WTC11 (cell line): ENCODE measurements at regions of chrX and their contacts with region 1.

Region 1: GRCh38 chrX:94361250-94361649 is 687.2 kb downstream of the FAM133A start:
- DNase-seq: no peak
- ATAC-seq: no peak
- H3K4me3 Mint-ChIP-seq: no peak overlapping the region
- H3K27ac Mint-ChIP-seq: no peak overlapping the region
- H3K4me1 Mint-ChIP-seq: peaks cover 30% of the 10 kb centered on the region
- H3K27me3 Mint-ChIP-seq: no peaks in the 10 kb centered on the region
- CTCF ChIP-seq: no peak

Region 2: DNA sequence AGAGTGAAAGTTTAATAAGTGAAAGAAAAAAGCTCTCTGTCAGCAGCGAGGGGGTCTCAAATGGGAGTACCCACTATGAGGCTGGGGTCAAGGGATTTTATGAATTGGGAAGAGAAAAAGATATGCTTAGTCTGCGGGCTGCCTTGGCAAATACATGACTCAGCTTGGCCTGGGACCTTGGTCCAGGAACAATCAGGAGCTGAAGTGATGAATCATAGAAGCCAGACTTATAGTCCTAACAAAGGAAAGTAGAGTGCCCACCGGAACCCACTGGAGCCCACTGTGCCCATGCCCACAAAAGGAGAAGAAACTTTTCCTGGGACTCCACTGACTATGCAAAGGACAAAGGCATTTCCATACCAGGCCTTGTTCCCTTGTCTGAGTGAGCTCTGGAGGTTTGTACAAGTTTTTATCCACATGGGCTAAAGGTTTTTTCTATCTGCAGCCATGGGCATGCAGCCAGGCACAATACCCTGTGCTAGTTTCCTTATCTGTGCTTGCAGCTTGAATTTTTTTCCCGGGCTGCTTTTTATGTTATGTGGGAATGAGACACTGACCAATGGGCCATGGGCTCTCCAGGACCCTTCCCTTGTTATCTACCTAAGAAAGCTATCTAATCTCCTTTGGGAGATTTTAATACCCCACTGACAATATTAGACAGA is 485.5 kb before region 1 on chrX:
- CTCF ChIA-PET with region 1: no interaction called
- POLR2A ChIA-PET with region 1: interaction called, 10 read pairs
- DNase-seq: no peak
- ATAC-seq: no peak
- H3K4me3 Mint-ChIP-seq: no peak overlapping the region
- H3K27ac Mint-ChIP-seq: no peak overlapping the region
- H3K4me1 Mint-ChIP-seq: peaks cover 23% of the 10 kb centered on the region
- H3K27me3 Mint-ChIP-seq: no peaks in the 10 kb centered on the region
- CTCF ChIP-seq: no peak